Activated CD4-positive, alpha-beta memory T cell treated with anti-CD3 and anti-CD28 coated beads for 36 hours (primary cell): ENCODE measurements at regions of chr20 and their contacts with region 1.

Region 1: DNA sequence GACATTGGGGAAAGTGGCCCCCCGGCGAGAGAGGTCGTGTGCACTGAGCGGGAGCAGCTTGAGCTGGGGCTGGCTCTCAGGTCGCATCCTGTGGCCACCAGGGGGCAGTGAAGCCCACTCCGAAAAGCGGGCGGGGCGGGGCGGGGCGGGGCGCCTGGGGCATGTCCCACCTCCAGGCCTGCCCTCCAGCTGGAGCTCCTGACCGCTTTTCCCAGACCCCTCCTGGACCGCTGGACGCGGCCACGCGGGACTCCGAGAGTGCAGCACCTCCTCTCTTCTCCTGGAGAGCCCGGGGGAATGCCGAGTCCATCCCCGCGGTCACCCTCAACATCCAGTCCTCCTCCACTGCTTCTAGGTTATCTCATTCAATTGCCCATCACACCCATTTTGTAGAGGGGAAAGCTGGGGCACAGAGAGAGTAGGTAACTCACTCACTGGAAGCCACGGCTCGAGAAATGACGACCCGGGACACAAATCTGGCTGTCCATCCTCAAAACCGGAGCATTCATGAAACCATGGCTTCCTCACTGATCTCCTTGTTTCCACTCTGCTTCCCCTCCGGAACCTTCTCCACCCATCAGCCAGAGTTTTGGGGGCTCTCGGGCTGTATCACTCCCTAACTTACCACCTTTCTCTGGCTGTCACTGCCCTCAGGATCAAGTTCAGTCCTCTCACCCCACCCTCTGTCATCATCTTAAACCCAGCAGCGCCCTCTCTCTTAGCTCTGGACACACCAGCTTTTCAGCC is 24.1 kb downstream of the COX4I2 start:
- DNase-seq: peak; percentile 85
- H3K4me3 Mint-ChIP-seq: peak overlapping the region; percentile 60
- H3K27ac Mint-ChIP-seq: peak overlapping the region; percentile 70
- H3K4me1 Mint-ChIP-seq: peaks cover 47% of the 10 kb centered on the region
- H3K27me3 Mint-ChIP-seq: no peaks in the 10 kb centered on the region

Region 2: DNA sequence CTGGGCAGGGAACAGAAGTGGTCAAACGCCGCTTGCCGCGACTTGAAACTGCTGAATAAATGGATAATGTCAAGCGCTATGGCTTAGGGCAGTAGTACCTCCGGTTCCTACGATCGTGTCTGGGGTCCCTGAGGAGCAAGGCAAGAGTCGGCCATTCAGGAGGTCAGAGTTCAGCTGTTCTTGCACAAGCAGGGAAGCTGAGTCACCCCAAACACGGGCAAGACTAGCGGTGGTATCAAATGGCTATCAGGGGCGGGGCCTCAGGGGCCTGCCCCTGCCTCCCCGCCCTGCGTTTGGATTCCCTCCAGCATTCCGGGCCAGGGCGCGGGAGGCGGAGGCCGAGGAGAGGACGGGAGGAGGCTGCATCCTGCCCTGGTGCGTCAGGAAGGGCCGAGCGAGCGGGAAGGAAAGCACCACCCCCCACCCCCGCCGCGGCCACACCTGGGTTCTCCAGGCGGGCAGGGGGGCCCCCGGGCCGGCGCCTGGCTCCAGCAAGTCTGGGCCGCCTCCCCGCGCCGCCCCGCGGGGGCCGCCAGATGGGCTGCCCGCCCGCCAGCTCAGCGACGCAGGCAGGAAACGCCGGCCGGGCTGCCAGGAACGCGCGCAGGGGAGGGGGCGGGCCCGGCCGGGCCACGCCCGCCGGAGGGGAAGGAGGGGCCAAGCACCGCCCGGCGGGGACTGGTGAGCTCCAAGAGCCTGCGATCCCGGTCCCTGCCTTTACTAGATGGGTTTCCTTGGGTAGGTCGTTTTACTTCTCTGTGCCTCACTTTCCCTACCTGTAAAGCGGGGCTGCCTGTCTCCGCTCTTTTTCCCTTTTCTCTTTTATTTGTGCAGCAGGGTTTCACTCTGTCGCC is 88.9 kb before region 1 on chr20:
- CTCF ChIA-PET with region 1: no interaction called
- POLR2A ChIA-PET with region 1: no interaction called
- intact Hi-C with region 1: no loop called
- DNase-seq: peak; percentile 94
- H3K4me3 Mint-ChIP-seq: peak overlapping the region; percentile 88
- H3K27ac Mint-ChIP-seq: peak overlapping the region; percentile 85
- H3K4me1 Mint-ChIP-seq: peaks cover 25% of the 10 kb centered on the region
- H3K27me3 Mint-ChIP-seq: no peaks in the 10 kb centered on the region

Region 3: DNA sequence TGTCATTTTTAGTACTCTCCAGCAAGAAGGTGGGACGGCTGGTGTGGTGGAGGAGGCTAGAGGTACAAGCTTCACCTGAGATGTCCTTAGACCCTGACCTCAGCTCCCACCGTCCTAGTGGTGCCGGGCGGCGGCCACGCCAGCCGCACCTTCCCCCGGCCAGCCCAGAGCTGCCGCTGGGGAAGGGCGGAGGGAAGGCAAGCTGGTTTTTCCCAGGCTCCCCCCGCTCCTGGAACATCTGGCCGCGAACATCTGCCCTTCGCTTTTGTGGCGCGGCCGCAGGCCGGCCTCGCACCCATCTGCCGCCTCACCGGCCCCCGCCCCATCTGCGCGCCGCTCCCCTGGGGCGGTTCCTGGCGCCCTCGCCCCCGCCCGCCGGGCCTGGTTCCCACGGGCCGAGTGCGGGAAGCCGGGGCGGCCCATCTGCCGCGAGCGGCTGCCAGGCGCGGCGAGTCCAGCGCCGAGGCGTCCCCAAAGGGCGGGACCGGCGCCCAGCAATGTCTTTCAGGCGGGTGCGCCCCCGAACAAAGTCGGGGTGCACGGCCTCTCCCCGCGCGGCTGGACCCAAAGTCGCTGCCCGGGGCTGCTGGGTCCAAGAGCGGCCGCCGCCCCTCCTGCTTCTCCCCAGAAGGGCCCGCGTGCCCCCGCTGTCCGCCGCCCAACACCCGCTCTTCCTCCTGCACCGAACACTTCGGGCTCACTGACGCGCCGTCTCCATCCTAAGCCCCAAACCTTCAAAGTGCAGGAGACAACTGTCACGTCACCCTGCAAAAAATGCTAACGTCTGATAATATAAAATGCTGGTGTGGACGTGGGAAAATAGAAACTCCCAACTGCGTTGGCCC is 74.0 kb before region 1 on chr20:
- CTCF ChIA-PET with region 1: no interaction called
- POLR2A ChIA-PET with region 1: no interaction called
- intact Hi-C with region 1: no loop called
- DNase-seq: no peak
- H3K4me3 Mint-ChIP-seq: peak overlapping the region; percentile 40
- H3K27ac Mint-ChIP-seq: no peak overlapping the region
- H3K4me1 Mint-ChIP-seq: peaks cover 8% of the 10 kb centered on the region
- H3K27me3 Mint-ChIP-seq: peaks cover 20% of the 10 kb centered on the region

Region 4: DNA sequence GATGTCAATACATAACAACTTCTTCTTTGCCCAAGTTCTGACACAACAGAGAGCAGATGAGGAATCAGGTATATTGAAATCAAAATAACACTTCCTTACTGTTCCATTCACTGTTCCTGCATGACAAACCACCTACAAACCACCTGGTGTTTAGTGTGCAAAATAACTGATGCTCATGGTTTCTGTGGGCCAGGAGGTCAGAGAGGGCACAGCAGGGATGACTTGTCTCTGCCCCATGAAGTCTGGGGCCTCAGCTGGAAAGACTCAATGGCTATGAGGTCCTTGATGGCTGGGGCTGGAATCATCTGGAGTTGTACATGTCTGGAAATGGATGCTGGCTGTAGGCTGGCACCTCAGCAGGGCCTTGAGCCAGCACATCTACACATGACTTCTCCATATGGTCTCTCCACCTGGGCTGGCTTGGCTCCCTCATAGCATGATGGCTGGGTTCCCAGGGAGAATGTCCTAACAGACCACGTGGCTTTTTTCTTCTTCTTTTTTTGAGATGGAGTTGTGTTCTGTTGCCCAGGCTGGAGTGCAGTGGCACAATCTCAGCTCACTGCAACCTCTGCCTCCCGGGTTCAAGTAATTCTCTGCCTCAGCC is 31.5 kb before region 1 on chr20:
- CTCF ChIA-PET with region 1: interaction called, 37 read pairs
- POLR2A ChIA-PET with region 1: interaction called, 5 read pairs
- intact Hi-C with region 1: no loop called
- DNase-seq: peak; percentile 25
- H3K4me3 Mint-ChIP-seq: no peak overlapping the region
- H3K27ac Mint-ChIP-seq: no peak overlapping the region
- H3K4me1 Mint-ChIP-seq: peaks cover 3% of the 10 kb centered on the region
- H3K27me3 Mint-ChIP-seq: no peaks in the 10 kb centered on the region

Region 5: DNA sequence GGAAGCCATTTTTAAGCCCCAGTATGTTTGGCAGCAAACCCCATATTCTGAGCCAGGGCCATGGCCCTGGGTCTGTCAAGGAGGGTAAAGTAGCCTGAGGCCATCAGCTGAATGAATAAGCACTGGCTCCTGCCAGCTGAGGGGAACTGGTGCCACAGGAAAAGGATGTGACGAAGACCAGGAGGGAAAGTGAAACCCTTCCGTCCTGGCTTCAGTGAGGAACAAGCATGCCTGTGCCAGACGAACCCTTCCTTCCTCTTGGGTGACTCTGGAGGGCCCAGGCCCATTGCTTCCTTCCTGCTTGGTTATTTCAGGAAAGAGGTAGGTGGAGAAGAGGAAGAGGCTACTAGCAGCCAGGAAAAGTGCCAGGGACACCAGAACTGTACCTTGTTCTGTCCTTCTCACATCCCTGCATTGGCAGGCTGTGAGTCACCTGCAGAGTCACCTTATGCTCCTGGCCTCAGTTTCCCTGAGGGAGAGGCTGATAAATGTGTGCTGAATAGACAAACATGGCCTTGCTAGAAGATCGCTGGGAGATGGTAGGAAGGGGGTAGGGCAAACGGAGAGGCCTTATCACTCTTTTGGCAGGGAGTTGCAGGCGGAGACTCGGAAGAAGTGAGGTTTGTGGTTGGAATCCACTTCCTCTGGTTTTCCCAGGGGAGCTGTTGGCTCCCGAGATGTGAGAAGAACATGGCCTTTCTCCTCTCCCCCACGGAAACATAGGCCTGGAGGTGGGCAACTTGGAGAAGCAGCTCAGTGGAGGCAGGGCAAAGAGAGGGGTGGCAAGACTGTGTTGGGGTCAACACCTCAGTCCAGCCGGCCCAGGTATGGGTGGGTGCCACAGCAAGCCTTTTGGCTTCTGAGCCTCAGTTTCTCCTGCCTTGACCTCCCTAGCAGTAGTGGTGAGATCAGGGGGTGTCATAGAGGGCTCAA is 13.4 kb after region 1 on chr20:
- CTCF ChIA-PET with region 1: interaction called, 39 read pairs
- POLR2A ChIA-PET with region 1: interaction called, 5 read pairs
- intact Hi-C with region 1: loop called (anchors 1 kb)
- DNase-seq: peak; percentile 86
- H3K4me3 Mint-ChIP-seq: peak overlapping the region; percentile 78
- H3K27ac Mint-ChIP-seq: peak overlapping the region; percentile 92
- H3K4me1 Mint-ChIP-seq: peaks cover 76% of the 10 kb centered on the region
- H3K27me3 Mint-ChIP-seq: no peaks in the 10 kb centered on the region

Region 6: DNA sequence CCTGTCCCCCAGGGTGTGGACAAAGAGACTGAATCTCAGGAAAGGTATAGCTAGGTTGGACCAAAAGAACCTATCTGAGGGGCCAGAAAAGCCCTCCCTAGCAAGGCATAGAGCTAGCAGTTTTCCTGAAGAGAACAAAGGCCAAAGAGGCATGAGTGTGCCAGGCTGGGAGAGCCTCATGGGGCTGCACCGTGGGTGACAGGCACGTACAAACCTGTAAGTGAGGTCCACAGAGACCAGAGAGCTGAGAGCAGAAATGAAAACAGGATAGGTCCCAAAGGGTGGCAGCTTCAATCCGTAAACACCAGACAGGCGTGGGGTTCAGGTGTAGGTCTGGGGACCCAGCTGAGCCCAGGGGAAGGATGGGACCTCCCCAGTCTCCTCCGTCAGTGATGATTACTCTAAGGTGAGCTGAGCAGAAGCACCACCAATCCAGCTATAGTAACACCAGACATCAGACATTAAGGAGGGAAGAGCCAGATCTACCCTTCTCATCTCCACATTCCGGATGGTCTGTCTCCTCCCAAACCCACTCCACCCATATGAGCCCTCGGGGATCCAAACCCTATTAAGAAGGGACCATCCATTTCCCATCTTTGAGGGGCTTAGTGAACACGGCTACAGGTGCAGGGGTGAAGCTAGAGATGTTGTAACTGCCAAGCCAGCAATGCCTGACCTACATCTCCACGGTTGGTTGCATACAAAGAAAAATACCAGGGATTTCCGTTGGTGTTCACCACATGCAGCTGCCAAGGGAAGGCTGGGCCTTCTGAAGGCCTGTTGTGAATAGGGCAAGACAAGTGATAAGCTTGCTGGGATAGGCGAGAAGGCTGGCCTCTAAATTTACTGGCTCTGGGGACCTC is 22.6 kb after region 1 on chr20:
- CTCF ChIA-PET with region 1: interaction called, 34 read pairs
- POLR2A ChIA-PET with region 1: interaction called, 4 read pairs
- intact Hi-C with region 1: no loop called
- DNase-seq: no peak
- H3K4me3 Mint-ChIP-seq: no peak overlapping the region
- H3K27ac Mint-ChIP-seq: peak overlapping the region; percentile 70
- H3K4me1 Mint-ChIP-seq: peaks cover 77% of the 10 kb centered on the region
- H3K27me3 Mint-ChIP-seq: no peaks in the 10 kb centered on the region

Region 7: DNA sequence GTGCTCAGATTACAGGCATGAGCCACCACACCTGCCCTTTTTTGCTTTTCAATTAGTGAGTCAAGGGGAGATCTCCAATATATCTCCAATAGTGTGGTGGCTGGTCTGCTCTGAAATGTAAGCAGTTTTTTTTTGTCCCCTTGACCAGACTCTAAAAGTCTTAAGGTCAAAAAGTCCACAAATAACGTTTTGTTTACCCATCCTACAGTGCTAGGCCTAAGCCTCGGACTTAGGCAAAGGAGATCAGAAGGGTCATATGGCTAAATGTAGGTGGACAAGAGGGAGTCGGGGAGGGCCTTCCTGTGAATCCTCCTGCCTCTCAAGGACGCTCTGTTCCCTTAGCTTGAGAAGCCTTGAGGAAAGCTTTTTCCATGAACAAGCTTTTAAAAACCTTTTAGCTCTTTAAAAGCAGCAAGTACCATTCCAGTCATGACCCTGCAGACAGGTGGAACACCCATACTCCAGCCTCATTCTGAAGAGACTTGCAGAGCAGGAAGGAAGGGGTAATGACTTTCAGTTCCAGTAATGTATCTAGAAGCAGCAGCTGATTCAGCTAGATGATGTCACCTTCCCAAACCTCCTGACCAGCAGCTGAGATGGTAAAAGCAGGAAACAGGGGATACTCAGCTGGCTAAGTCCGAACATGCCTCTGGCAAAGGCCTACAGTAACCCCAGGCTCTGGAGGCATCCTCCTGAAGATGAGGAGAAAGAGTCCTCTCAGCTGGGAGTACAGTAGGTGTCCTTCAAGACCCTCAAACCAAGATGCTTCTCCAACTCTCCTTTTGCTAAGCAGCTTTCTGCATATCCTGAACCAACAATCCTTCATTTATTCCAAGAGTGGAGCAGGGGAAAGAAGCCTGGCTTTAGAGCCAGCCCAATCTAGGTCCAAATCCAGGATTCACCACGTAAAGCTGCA is 37.3 kb after region 1 on chr20:
- CTCF ChIA-PET with region 1: interaction called, 39 read pairs
- POLR2A ChIA-PET with region 1: interaction called, 5 read pairs
- intact Hi-C with region 1: no loop called
- DNase-seq: peak; percentile 55
- H3K4me3 Mint-ChIP-seq: peak overlapping the region; percentile 29
- H3K27ac Mint-ChIP-seq: peak overlapping the region; percentile 91
- H3K4me1 Mint-ChIP-seq: peaks cover 64% of the 10 kb centered on the region
- H3K27me3 Mint-ChIP-seq: no peaks in the 10 kb centered on the region

Region 8: DNA sequence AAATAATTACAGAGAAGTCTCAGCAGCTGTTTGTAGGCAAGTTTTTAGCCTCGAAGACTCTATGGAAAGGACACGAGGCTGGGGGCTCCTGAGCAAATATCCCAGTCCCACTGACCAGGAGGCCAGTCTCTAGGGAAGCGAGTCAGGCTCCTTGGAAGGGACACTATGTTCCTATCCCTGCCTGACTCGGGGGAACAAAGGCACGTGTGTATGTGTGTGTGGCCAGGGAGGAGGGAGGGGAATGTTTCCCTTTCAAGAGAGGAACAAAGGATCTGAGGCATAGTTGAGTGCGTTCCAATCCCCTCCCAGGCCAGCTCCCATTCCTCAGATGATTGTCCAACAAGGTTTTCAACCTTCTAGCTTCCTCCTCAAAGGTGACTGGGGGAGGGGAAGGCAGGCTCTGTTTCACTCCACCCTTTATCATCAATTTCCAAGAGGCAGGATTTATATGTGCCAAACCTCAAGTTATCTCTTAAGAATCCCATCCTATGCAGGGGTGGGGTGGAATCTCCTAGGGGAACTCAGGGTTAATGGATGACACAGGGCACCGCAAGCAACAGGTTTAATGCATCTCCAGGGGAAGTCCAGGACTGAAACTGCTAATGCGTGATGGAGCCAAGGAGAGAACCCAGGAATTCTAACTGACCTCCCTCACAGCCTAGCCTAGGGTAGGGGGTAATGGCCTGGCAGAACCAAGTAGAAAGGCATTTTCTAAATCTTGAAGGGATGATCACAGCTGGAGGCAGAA is 50.9 kb after region 1 on chr20:
- CTCF ChIA-PET with region 1: interaction called, 417 read pairs
- POLR2A ChIA-PET with region 1: interaction called, 7 read pairs
- intact Hi-C with region 1: no loop called
- DNase-seq: no peak
- H3K4me3 Mint-ChIP-seq: peak overlapping the region; percentile 24
- H3K27ac Mint-ChIP-seq: peak overlapping the region; percentile 88
- H3K4me1 Mint-ChIP-seq: peaks cover 93% of the 10 kb centered on the region
- H3K27me3 Mint-ChIP-seq: no peaks in the 10 kb centered on the region

Region 9: DNA sequence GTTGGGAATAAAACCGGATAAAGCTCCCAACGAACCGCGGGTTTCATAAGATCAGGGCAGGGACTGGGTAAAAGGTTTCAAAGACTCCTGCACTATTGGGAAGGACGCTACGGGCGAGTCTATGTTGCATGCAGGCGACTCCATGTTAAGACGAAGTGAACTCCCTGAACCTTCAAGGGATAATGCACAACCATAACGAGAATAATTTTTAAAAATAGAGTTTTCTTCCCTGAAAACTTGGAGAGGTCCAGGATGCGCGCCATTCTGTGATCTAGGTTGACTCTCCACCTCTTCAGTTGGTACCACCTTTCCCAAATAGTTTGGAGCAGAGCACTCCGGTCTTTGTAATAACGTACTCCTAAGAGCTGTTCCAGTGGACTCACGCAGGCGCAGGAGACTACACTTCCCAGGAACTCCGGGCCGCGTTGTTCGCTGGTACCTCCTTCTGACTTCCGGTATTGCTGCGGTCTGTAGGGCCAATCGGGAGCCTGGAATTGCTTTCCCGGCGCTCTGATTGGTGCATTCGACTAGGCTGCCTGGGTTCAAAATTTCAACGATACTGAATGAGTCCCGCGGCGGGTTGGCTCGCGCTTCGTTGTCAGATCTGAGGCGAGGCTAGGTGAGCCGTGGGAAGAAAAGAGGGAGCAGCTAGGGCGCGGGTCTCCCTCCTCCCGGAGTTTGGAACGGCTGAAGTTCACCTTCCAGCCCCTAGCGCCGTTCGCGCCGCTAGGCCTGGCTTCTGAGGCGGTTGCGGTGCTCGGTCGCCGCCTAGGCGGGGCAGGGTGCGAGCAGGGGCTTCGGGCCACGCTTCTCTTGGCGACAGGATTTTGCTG is 77.1 kb after region 1 on chr20 and contains the start of gene TPX2:
- CTCF ChIA-PET with region 1: interaction called, 12 read pairs
- POLR2A ChIA-PET with region 1: no interaction called
- intact Hi-C with region 1: no loop called
- DNase-seq: peak; percentile 93
- H3K4me3 Mint-ChIP-seq: no peak within 1 kb of the TSS
- H3K27ac Mint-ChIP-seq: no peak within 1 kb of the TSS
- H3K4me1 Mint-ChIP-seq: peaks cover 5% of the 10 kb centered on the region
- H3K27me3 Mint-ChIP-seq: no peaks in the 10 kb centered on the region
- total RNA-seq, gene TPX2: 149 TPM